Endothelial cell of umbilical vein (primary cell): ENCODE measurements at regions of chr2 and their contacts with region 1.

Region 1: DNA sequence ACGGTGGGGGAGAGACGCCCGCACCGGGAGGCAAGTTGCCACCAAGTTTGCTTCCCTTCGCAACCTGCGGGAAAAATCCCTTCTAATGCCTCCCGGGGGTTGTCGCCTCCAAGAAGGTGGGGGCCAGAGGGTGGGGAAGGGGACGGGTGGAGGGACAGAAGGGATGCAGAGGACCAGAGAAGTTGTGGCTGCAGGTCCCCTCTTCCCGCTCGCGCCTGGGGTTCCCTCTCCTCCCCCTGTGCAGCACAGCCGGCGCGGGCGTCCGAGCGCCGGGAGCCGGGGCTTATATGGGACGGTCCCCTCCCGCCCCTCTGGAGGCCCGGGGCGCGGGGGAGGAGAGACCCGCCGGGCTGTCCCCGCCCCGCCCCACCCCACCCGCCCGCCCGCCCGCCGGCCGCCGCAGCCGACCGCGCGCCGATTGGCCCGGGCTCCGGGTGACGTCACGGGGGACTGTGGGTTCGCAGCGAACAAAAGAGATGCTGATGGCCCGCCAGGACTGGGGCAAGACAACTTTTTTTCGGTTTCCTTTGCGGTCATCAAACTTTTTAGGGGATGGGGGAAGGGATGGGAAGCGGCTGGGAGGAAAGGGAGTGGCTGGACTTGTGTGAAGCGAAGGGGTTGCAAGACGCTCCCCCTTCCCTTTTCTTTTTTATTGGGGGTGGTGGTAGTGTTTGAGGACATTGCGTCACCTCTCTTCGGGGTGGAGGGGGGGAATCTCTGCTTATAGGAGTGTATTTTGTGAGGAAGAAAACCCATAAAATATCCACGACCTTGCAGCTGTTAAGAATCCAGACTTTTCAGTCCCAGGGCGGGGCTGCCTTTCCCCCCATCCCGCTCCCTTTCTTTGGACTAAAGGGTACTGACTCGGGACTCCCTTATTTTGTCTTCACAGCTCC is at the start of gene FN1:
- DNase-seq: peak; percentile 99
- H3K4me3 ChIP-seq: peak within 1 kb of the TSS; percentile 77 to 100 (median 99)
- H3K27ac ChIP-seq: peak within 1 kb of the TSS; percentile 100
- H3K4me1 ChIP-seq: peaks cover 44% of the 10 kb centered on the region
- H3K27me3 ChIP-seq: no peaks in the 10 kb centered on the region
- CTCF ChIP-seq: no peak
- POLR2A ChIP-seq: peak; percentile 98
- total RNA-seq, gene FN1: 3,221 and 3,760 TPM in 2 replicates

Region 2: DNA sequence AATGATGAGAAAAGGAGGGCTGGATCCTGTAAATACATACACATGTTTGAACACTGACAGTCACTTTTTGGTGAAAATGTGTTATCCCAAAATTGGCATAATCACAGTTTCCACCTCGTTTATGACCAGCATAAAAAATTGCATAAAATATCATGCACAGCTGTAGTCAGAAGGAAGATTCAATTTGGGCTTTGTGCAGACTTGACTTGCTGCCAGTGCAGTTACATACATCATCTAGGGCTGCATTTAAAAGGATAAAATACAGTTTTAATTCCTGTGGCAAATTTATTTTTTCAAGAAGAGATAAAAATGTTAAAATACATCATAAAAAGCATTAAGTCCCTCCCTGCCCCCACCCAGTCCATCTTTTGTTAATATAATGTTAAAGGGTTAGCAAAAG is 921.4 kb before region 1 on chr2:
- CTCF ChIA-PET with region 1: no interaction called
- POLR2A ChIA-PET with region 1: no interaction called
- dilution Hi-C with region 1: no loop called
- intact Hi-C with region 1: no loop called
- DNase-seq: no peak
- H3K4me3 ChIP-seq: no peak overlapping the region
- H3K27ac ChIP-seq: no peak overlapping the region
- H3K4me1 ChIP-seq: no peaks in the 10 kb centered on the region
- H3K27me3 ChIP-seq: no peaks in the 10 kb centered on the region
- CTCF ChIP-seq: no peak
- POLR2A ChIP-seq: no peak

Region 3: GRCh38 chr2:215403441-215404347 is 32.4 kb before region 1 on chr2:
- CTCF ChIA-PET with region 1: no interaction called
- POLR2A ChIA-PET with region 1: no interaction called
- dilution Hi-C with region 1: no loop called
- intact Hi-C with region 1: no loop called
- DNase-seq: no peak
- H3K4me3 ChIP-seq: no peak overlapping the region
- H3K27ac ChIP-seq: no peak overlapping the region
- H3K4me1 ChIP-seq: peaks cover 11% of the 10 kb centered on the region
- H3K27me3 ChIP-seq: no peaks in the 10 kb centered on the region
- CTCF ChIP-seq: no peak
- POLR2A ChIP-seq: peak; percentile 52

Region 4: GRCh38 chr2:215528555-215528954 is 92.5 kb after region 1 on chr2:
- CTCF ChIA-PET with region 1: interaction called, 3 read pairs
- POLR2A ChIA-PET with region 1: no interaction called
- dilution Hi-C with region 1: no loop called
- intact Hi-C with region 1: loop called (anchors 1 kb)
- DNase-seq: peak; percentile 98
- H3K4me3 ChIP-seq: no peak overlapping the region
- H3K27ac ChIP-seq: peak overlapping the region; percentile 99
- H3K4me1 ChIP-seq: peaks cover 44% of the 10 kb centered on the region
- H3K27me3 ChIP-seq: no peaks in the 10 kb centered on the region
- CTCF ChIP-seq: no peak
- POLR2A ChIP-seq: no peak

Region 5: DNA sequence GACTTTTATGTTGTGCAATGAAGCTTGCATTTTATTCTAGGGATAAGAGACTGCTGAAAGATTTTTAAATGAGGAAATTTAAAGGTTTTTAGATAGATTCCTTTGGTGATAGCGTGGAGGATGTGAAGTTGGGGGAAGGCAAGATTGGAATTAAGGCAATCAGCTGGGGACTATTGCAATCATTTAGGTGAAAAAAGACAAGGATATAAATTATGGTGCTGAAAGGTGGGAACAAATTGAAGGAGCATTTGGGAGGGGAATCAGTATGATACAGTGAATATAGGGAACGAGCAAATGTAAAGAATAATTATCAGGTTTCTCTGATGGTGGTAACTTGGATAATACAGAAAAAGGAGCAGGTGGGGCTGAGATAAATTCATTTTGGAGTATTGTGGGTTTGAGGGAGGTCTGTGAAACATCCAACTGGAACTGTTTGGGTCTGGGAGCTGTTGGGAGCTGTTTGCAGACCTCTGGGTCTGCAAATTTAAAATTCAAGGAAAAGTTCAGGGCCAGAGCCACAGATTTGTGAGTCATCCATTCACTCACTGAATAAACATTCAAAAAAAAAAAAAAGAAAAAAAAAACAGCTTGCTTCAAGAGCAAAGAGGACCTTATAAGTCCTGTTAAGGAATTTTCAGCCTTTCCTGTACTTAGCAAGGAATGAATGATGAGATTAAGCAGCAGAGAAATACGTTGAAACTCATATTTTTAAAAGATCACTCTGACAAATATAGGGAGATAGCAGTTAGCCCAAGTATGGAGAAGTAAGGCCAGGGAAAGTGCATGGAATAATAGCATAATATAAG is 257.3 kb after region 1 on chr2:
- CTCF ChIA-PET with region 1: no interaction called
- POLR2A ChIA-PET with region 1: interaction called, 6 read pairs
- dilution Hi-C with region 1: no loop called
- intact Hi-C with region 1: loop called (anchors 1 kb)
- DNase-seq: peak; percentile 85
- H3K4me3 ChIP-seq: no peak overlapping the region
- H3K27ac ChIP-seq: peak overlapping the region; percentile 83
- H3K4me1 ChIP-seq: peaks cover 33% of the 10 kb centered on the region
- H3K27me3 ChIP-seq: no peaks in the 10 kb centered on the region
- CTCF ChIP-seq: no peak
- POLR2A ChIP-seq: no peak

Region 6: DNA sequence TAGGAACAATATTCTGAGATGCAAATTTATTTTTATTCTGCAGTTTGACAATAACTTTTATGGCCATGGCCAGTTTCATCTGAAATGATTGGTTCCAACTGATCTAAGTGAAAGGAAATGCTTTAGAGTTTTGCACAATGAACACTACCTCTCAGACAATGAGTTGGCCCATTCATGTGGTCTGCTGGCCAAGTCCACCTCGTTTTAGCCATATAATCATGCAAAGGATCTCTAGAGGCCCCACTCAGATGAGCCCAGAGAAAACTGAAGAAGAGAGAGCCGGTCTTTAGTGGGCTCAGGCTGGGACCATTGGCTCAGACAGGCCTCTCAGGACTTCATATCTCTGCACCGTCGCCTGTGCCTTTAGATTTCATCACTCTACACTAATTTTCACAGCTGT is 322.6 kb after region 1 on chr2:
- CTCF ChIA-PET with region 1: no interaction called
- POLR2A ChIA-PET with region 1: no interaction called
- dilution Hi-C with region 1: no loop called
- intact Hi-C with region 1: loop called (anchors 1 kb)
- DNase-seq: peak; percentile 87
- H3K4me3 ChIP-seq: no peak overlapping the region
- H3K27ac ChIP-seq: peak overlapping the region; percentile 69
- H3K4me1 ChIP-seq: peaks cover 39% of the 10 kb centered on the region
- H3K27me3 ChIP-seq: no peaks in the 10 kb centered on the region
- CTCF ChIP-seq: no peak
- POLR2A ChIP-seq: no peak

Region 7: GRCh38 chr2:215845839-215846586 is 410.0 kb after region 1 on chr2:
- CTCF ChIA-PET with region 1: no interaction called
- POLR2A ChIA-PET with region 1: interaction called, 4 read pairs
- dilution Hi-C with region 1: no loop called
- intact Hi-C with region 1: loop called (anchors 1 kb)
- DNase-seq: peak; percentile 58
- H3K4me3 ChIP-seq: peak overlapping the region in 2 of 3 experiments; percentile 13 to 91
- H3K27ac ChIP-seq: peak overlapping the region; percentile 98
- H3K4me1 ChIP-seq: peaks cover 87% of the 10 kb centered on the region
- H3K27me3 ChIP-seq: no peaks in the 10 kb centered on the region
- CTCF ChIP-seq: no peak
- POLR2A ChIP-seq: peak; percentile 8